Heart right ventricle (tissue), 16 donors: ENCODE measurements at regions of chr2 and their contacts with region 1.

Region 1: DNA sequence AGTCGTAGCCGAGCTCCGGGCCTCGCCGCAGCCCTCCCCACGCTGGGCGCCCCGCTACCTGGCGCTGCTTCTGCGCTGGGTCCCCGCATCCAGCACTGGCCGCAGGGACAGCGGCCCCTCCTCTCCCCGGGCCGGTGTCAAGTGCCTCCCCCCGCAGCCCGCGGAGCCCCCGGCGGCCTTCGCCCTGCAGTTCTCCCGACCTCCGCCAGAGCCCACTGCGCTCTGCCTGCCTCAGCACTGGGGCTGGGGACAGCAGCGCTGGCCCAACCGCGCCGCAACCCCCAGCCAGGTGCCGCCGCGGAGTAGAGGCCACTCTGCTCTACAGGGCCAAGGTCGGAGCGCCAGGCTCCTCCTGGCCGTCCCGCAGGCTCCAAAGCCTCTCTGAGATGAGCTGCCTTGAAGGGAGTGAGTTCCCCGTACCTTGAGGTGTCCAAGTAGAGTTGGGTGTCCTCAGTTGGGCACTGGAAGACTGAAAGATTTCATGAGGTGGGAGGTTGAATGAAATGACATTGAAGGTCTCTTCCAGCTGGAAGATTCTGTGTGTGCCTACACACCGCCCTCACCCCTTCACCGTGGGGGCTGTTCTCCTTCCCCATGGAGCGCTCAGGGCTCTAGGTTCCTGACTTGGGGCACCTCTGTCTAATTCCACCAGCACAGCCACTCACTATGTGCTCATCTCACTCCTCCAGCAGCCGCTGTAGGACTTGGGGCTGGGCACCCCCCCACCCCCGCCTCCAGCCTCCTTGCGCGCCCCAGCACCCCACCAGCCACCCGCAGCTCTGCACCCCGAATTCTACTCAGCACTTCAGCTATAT is 854 bp upstream of the DNMT3A start:
- DNase-seq: peak; percentile 84 to 87
- ATAC-seq: peak; percentile 83 to 93 (median 87)
- H3K4me3 ChIP-seq: peak overlapping the region; percentile 38 to 80 (median 70)
- H3K27ac ChIP-seq: peak overlapping the region; percentile 59 to 90 (median 84)
- H3K4me1 ChIP-seq: peaks cover 13 to 40% (median 31%) of the 10 kb centered on the region in 9 donors
- H3K27me3 ChIP-seq: no peaks in the 10 kb centered on the region
- CTCF ChIP-seq: peak; percentile 92 to 99 (median 98)

Region 2: GRCh38 chr2:25252281-25253105 is 90.1 kb before region 1 on chr2:
- intact Hi-C with region 1: loop called in 1 of 10 experiments (anchors 5 kb)
- DNase-seq: peak; percentile 66 to 72
- ATAC-seq: peak; percentile 61 to 83 (median 74)
- H3K4me3 ChIP-seq: peak overlapping the region; percentile 22 to 71 (median 64)
- H3K27ac ChIP-seq: peak overlapping the region; percentile 18 to 90 (median 86)
- H3K4me1 ChIP-seq: peaks cover 16 to 40% (median 31%) of the 10 kb centered on the region in 9 donors
- H3K27me3 ChIP-seq: no peaks in the 10 kb centered on the region
- CTCF ChIP-seq: no peak

Region 3: GRCh38 chr2:25276569-25277465 is 65.8 kb before region 1 on chr2:
- intact Hi-C with region 1: loop called in 3 of 10 experiments (anchors 2 to 10 kb)
- DNase-seq: peak; percentile 64 to 82
- ATAC-seq: peak; percentile 38 to 73 (median 52)
- H3K4me3 ChIP-seq: peak overlapping the region in 9 of 10 donors; percentile 18 to 56 (median 46)
- H3K27ac ChIP-seq: peak overlapping the region; percentile 14 to 94 (median 82)
- H3K4me1 ChIP-seq: peaks cover 6 to 81% (median 71%) of the 10 kb centered on the region in 9 donors
- H3K27me3 ChIP-seq: no peaks in the 10 kb centered on the region
- CTCF ChIP-seq: peak; percentile 71 to 93 (median 86)

Region 4: GRCh38 chr2:25286025-25286400 is 56.6 kb before region 1 on chr2:
- intact Hi-C with region 1: loop called in 1 of 10 experiments (anchors 10 kb)
- DNase-seq: no peak
- ATAC-seq: peak in 7 of 8 donors; percentile 53 to 78 (median 68)
- H3K4me3 ChIP-seq: no peak overlapping the region
- H3K27ac ChIP-seq: peak overlapping the region in 8 of 10 donors; percentile 16 to 78 (median 44)
- H3K4me1 ChIP-seq: peaks cover 3 to 41% (median 29%) of the 10 kb centered on the region in 9 donors
- H3K27me3 ChIP-seq: no peaks in the 10 kb centered on the region
- CTCF ChIP-seq: no peak

Region 5: DNA sequence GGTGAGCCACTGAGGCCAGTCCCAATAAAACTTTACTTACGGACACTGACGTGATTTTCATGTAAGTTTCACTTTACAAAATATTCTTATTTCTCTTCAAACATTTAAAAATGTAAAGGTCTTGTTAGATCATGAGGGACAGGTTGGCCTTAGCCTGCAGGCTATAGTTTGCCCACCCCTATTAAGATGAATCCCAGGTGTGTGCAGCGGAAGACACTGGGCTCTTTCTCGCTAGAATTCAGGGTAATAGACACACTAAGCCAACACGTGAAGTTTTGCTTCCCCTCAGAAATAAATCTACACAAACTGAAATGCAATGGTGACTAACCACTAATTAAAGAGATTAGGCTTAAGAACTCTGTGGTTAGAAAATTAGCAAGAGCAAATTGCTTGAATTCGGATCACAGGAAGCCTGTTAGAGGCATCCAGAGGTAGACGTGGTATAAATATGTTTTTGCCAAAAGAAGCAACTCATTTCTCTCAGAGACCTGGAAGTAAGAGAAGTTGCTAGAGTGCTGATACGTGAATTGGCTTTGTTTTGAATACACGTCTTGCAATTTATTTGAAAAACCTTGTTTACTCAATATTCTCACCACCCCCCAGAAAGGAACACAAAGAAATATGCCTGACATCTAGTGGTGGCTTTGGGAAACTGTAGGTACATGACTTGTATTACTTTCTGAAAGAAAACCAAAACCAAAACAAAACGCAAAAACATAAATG is 179.2 kb after region 1 on chr2:
- intact Hi-C with region 1: loop called in 2 of 10 experiments (anchors 5 to 10 kb)
- DNase-seq: peak in 1 of 2 donors; percentile 46
- ATAC-seq: peak in 7 of 8 donors; percentile 55 to 83 (median 67)
- H3K4me3 ChIP-seq: peak overlapping the region in 6 of 10 donors; percentile 20 to 39 (median 32)
- H3K27ac ChIP-seq: peak overlapping the region in 2 of 10 donors; percentile 4 to 41
- H3K4me1 ChIP-seq: peaks cover 0 to 16% (median 4%) of the 10 kb centered on the region in 9 donors
- H3K27me3 ChIP-seq: no peaks in the 10 kb centered on the region
- CTCF ChIP-seq: peak; percentile 67 to 87 (median 79)